HCT116 (cell line): ENCODE measurements at regions of chr17 and their contacts with region 1.

Region 1: DNA sequence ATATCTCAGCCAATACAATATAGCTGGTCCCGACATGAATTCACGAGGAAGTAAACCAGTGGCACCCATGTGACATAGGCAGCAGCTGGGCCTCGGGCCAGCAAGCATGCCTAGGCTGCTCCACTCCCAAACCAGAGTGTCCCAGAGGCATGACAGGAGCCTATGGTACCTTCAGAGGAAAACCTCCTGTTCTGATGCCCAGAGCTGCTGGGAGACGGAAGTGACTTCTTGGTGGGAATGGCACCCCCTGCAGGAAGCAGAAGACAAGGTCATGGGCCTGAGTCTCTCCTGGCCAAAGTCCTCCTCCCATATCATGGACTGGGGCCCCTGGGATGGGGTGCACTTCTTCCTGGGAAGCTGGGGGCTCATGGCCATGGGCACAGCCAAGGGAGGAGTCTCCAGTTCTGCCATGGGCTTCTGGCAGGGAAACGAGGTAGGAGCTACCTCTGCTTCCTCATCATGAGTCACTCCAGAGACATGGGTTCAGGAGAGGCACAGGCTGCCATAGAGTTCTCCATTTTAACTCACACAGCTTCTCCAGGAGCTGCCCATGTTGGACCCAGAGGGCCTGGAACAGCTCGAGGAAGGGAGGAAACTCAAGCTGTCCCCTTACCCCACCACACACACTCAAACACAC is 13.4 kb downstream of the FBF1 start:
- DNase-seq: peak; percentile 46
- ATAC-seq: peak; percentile 94
- H3K4me3 ChIP-seq: no peak overlapping the region
- H3K27ac ChIP-seq: no peak overlapping the region
- H3K4me1 ChIP-seq: peaks cover 0 to 8% of the 10 kb centered on the region in 2 experiments; a peak in 2 of 4 replicates
- H3K27me3 ChIP-seq: no peaks in the 10 kb centered on the region
- CTCF ChIP-seq: peak; percentile 48 to 60 (median 50)
- POLR2A ChIP-seq: no peak
- RAD21 ChIP-seq: peak; percentile 52; the same call in 1 of the 2 replicates

Region 2: GRCh38 chr17:75917141-75917916 is 10.1 kb before region 1 on chr17:
- CTCF ChIA-PET with region 1: interaction called, 10 read pairs
- POLR2A ChIA-PET with region 1: no interaction called
- RAD21 ChIA-PET with region 1: no interaction called
- intact Hi-C with region 1: no loop called
- DNase-seq: no peak
- ATAC-seq: no peak
- H3K4me3 ChIP-seq: no peak overlapping the region
- H3K27ac ChIP-seq: no peak overlapping the region; the same call in 1 of the 2 replicates
- H3K4me1 ChIP-seq: peaks cover 0 to 9% of the 10 kb centered on the region in 2 experiments; a peak in 2 of 4 replicates
- H3K27me3 ChIP-seq: no peaks in the 10 kb centered on the region
- CTCF ChIP-seq: no peak
- POLR2A ChIP-seq: no peak
- RAD21 ChIP-seq: no peak